ENCODE measurements at regions of chr15 and their contacts with region 1.

Region 1: DNA sequence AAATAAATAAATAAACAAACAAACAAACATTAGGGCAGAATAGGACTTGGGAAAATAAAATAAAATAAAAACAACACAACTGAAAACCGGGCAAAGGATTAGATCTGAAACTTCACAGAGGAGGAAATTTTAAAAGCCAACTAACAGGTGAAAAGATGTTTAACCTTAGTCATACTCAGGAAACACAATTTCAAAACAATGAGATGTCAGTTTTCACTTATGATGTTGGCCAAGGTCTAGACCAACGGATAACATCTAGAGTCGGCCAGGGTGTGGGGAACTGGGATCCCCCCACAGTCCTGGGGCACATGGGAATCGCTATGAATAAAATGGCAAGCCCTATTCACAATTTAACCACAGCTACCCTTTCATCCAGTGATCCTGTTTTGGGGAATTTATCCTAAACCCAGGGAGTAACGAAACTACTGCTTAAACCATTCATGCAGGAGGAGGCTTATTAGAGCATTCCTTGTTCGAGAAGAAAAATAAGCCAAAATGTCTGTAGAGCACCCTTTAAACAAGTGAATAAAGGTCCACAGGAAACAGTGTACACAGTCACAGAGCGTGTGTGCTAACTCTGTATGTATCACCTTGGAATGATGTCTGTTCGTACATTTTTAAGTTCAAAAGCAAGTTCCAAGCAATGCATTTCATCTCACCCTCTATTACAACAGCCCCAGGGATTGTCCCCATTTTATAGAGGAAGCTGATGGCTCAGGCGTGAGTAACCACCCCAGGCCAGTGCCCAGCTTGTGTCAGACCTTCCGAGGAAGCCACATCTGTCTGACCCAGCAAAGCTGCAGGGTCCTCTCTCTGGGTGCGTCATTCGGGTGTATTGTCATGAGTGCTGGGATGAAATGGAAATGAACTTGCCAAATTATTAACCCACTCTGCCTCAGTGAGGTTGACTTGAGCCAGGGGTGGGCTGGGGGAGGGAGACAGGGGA is 6.3 kb upstream of the ANPEP start:
- DNase-seq: peak; percentile 72
- H3K4me3 ChIP-seq: no peak overlapping the region
- H3K27ac ChIP-seq: peak overlapping the region; percentile 71
- H3K4me1 ChIP-seq: peaks cover 34% of the 10 kb centered on the region
- H3K27me3 ChIP-seq: no peaks in the 10 kb centered on the region
- CTCF ChIP-seq: no peak
- POLR2A ChIP-seq: peak; percentile 36

Region 2: DNA sequence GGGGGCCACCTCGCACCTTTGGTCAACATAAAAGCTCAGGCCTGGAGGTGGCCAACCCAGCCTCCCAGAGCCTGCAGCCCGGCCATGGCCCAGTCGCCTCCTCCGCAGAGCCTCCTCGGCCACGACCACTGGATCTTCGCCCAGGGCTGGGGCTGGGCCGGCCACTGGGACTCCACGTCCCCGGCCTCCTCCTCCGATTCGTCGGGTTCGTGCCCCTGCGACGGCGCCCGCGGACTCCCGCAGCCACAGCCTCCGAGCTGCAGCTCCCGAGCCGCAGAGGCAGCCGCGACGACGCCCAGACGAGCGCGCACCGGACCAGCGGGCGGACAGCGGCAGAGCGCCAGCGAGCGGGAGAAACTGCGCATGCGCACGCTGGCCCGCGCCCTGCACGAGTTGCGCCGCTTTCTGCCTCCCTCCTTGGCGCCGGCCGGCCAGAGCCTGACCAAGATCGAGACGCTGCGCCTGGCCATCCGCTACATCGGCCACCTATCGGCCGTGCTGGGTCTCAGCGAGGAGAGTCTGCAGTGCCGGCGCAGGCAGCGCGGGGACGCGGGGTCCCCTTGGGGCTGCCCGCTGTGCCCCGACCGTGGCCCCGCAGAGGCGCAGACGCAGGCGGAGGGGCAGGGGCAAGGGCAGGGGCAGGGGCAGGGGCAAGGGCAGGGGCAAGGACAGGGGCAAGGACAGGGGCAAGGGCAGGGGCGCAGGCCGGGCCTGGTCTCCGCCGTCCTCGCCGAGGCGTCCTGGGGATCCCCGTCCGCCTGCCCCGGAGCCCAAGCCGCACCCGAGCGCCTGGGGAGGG is 44.5 kb before region 1 on chr15 and contains the start of gene MESP2:
- CTCF ChIA-PET with region 1: no interaction called
- POLR2A ChIA-PET with region 1: no interaction called
- dilution Hi-C with region 1: no loop called
- intact Hi-C with region 1: loop called (anchors 5 kb)
- DNase-seq: peak; percentile 88
- H3K4me3 ChIP-seq: peak within 1 kb of the TSS in 2 of 3 experiments; percentile 4 to 30
- H3K27ac ChIP-seq: no peak within 1 kb of the TSS
- H3K4me1 ChIP-seq: peaks cover 6% of the 10 kb centered on the region
- H3K27me3 ChIP-seq: no peaks in the 10 kb centered on the region
- CTCF ChIP-seq: peak; percentile 55 to 73
- POLR2A ChIP-seq: no peak
- total RNA-seq, gene MESP2: 0.42 TPM in 1 of 2 replicates, not detected in the other

Region 3: GRCh38 chr15:89836255-89837133 is 15.6 kb after region 1 on chr15:
- CTCF ChIA-PET with region 1: interaction called, 10 read pairs
- POLR2A ChIA-PET with region 1: no interaction called
- dilution Hi-C with region 1: no loop called
- intact Hi-C with region 1: no loop called
- DNase-seq: no peak
- H3K4me3 ChIP-seq: no peak overlapping the region
- H3K27ac ChIP-seq: peak overlapping the region; percentile 2
- H3K4me1 ChIP-seq: peaks cover 18% of the 10 kb centered on the region
- H3K27me3 ChIP-seq: no peaks in the 10 kb centered on the region
- CTCF ChIP-seq: no peak
- POLR2A ChIP-seq: no peak

Region 4: DNA sequence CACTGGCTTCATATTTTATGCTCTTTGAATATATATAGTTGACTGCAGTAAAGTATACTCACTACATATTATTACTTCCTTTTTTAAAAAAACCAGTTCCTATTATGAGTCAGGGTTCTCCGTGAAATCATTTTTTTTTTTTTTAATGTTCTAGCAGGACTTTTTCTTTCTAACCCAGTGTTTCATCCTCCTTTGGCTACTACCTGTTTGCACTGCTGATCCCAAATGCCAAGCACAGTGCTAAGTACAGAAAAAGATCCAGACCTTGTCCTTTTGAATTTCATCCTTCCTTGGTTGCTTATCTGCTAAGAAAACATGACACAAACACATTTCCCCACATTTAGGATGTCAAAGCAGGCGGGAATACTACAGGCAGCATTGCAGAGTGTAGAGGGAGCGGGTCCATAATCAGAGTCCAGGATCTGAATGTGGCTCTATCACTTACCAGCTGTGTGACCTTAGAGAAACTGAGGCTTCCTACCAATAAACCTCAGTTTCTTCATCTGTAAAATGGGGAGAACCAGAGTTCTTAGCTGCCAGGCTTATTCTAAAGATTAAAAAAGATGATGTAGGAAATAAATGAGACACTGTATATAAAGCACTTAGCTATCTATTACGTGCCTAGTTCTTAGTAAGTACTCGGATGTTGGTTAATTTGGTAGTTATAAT is 30.9 kb after region 1 on chr15:
- CTCF ChIA-PET with region 1: interaction called, 4 read pairs
- POLR2A ChIA-PET with region 1: interaction called, 3 read pairs
- dilution Hi-C with region 1: no loop called
- intact Hi-C with region 1: loop called (anchors 2 kb)
- DNase-seq: peak; percentile 59
- H3K4me3 ChIP-seq: no peak overlapping the region
- H3K27ac ChIP-seq: peak overlapping the region; percentile 68
- H3K4me1 ChIP-seq: peaks cover 37% of the 10 kb centered on the region
- H3K27me3 ChIP-seq: no peaks in the 10 kb centered on the region
- CTCF ChIP-seq: no peak
- POLR2A ChIP-seq: no peak